ENCODE measurements at regions of chr1 and their contacts with region 1.

Region 1: GRCh38 chr1:101309334-101310311 is 72.8 kb downstream of the S1PR1 start:
- DNase-seq: peak; percentile 81
- ATAC-seq: peak; percentile 81
- H3K4me3 Mint-ChIP-seq: peak overlapping the region; percentile 75
- H3K27ac Mint-ChIP-seq: peak overlapping the region; percentile 95
- H3K4me1 Mint-ChIP-seq: peaks cover 72% of the 10 kb centered on the region
- H3K27me3 Mint-ChIP-seq: no peaks in the 10 kb centered on the region

Region 2: DNA sequence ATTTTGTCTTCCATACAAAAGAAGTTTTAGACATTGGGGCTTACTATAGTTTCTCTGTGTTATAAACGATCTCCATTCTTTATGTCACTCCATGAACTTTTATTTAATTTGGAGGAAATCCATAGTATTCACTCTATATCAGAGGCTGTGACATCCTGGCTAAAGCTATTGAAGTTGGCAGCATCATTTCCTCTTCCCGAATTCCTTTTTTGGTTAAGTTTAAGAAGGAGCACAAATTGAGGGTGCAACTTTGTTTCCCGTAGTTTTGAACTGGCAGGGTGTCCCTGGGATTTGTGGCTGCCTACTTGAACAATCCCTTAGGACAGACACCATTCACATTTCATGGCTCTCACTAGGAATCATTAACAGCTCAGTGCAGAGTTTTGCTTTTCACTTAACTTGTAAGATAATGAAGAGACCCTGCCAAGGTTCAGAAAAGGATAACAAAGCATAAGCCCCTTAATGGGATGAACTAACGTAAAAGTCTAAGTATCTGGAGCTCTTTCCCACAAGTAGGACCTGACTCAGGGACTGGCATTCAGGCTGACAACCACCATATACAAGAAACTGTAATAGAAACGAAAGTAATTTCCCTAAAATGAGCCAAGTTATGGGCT is 58.9 kb before region 1 on chr1:
- CTCF ChIA-PET with region 1: no interaction called
- POLR2A ChIA-PET with region 1: no interaction called
- DNase-seq: no peak
- ATAC-seq: no peak
- H3K4me3 Mint-ChIP-seq: no peak overlapping the region
- H3K27ac Mint-ChIP-seq: no peak overlapping the region
- H3K4me1 Mint-ChIP-seq: peaks cover 12% of the 10 kb centered on the region
- H3K27me3 Mint-ChIP-seq: no peaks in the 10 kb centered on the region

Region 3: GRCh38 chr1:101323535-101323934 is 13.9 kb after region 1 on chr1:
- CTCF ChIA-PET with region 1: interaction called, 30 read pairs
- POLR2A ChIA-PET with region 1: interaction called, 8 read pairs
- DNase-seq: no peak
- ATAC-seq: no peak
- H3K4me3 Mint-ChIP-seq: no peak overlapping the region
- H3K27ac Mint-ChIP-seq: no peak overlapping the region
- H3K4me1 Mint-ChIP-seq: no peaks in the 10 kb centered on the region
- H3K27me3 Mint-ChIP-seq: peaks cover 8% of the 10 kb centered on the region

Region 4: DNA sequence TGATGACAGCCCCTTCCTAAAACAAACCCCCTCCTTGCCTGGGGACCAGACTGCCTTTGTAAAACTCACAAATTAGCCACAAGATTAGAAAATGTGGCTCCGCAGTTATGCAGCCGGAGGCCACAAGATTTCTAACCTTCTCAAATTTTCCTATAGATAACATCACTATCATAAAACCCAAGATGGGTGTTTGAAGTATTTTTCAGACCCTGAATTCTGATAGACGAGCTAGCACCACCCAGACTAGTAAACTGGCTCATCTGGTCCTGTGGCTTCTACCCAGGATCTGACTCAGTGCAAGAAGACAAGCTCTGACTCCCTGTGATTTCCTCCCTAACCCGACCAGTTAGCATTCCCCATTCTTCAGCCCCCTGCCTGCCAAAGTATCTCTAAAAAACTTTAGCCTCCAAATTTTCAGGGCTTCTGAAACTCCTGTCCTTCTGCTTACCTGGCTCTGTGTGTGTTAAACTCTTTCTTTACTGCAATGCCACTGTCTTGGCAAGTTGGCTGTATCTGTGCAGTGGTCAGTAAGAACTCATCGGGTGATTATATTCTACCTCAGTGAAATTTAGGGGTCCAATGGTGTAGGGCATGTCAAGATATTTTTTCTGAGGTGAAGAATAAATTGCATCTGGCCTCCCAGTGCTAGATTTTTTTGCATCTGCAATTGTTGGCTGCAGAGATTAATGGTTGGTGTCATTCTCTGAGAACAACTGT is 29.2 kb after region 1 on chr1:
- CTCF ChIA-PET with region 1: interaction called, 13 read pairs
- POLR2A ChIA-PET with region 1: interaction called, 4 read pairs
- DNase-seq: no peak
- ATAC-seq: peak; percentile 64
- H3K4me3 Mint-ChIP-seq: no peak overlapping the region
- H3K27ac Mint-ChIP-seq: no peak overlapping the region
- H3K4me1 Mint-ChIP-seq: peaks cover 7% of the 10 kb centered on the region
- H3K27me3 Mint-ChIP-seq: no peaks in the 10 kb centered on the region

Region 5: DNA sequence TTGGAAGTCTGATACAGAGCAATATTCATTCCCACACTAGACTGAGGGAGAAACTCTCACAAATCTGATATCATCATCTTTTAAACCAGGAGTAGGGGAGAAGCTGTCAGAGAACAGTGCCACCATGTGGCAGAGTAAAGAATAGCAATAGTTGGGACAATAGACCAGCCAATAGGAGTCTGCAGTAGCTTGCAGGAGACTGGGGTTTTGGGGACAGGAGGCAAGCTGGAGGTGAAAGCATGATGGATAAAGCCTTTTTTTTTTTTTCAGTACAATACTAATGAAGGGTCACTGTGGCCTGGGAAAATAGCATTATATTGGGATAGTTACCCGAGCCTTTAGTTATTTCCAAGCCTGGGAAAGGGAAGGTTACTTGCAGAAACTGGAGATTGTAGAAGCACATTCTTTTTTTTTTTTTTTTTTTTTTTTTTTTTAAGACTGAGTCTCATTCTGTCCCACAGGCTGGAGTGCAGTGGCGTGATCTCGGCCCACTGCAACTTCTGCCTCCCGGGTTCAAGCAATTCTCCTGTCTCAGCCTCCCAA is 47.9 kb after region 1 on chr1:
- CTCF ChIA-PET with region 1: interaction called, 199 read pairs
- POLR2A ChIA-PET with region 1: interaction called, 18 read pairs
- DNase-seq: peak; percentile 85
- ATAC-seq: peak; percentile 100
- H3K4me3 Mint-ChIP-seq: no peak overlapping the region
- H3K27ac Mint-ChIP-seq: peak overlapping the region; percentile 60
- H3K4me1 Mint-ChIP-seq: peaks cover 8% of the 10 kb centered on the region
- H3K27me3 Mint-ChIP-seq: peaks cover 5% of the 10 kb centered on the region

Region 6: GRCh38 chr1:101388904-101389546 is 79.4 kb after region 1 on chr1:
- CTCF ChIA-PET with region 1: interaction called, 11 read pairs
- POLR2A ChIA-PET with region 1: no interaction called
- DNase-seq: peak; percentile 50
- ATAC-seq: peak; percentile 90
- H3K4me3 Mint-ChIP-seq: no peak overlapping the region
- H3K27ac Mint-ChIP-seq: peak overlapping the region; percentile 21
- H3K4me1 Mint-ChIP-seq: peaks cover 15% of the 10 kb centered on the region
- H3K27me3 Mint-ChIP-seq: no peaks in the 10 kb centered on the region

Region 7: DNA sequence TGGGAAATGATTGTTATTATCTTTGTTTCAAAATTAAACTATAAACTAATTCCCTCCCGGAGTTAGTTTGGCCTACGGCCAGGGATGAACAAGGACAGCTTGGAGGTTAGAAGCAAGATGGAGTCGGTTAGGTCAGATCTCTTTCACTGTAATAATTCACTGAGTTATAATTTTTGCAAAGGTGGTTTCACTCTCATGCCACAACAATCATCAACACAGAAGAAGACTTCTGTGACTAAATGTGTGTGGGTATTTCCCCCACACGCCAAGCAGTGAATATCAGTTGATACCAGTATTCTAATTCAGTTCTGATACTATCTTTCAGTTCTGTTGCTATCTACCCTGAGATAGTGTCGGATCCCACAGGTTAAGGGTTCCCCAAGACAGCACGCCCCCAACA is 142.3 kb after region 1 on chr1:
- CTCF ChIA-PET with region 1: interaction called, 40 read pairs
- POLR2A ChIA-PET with region 1: interaction called, 3 read pairs
- DNase-seq: no peak
- ATAC-seq: no peak
- H3K4me3 Mint-ChIP-seq: no peak overlapping the region
- H3K27ac Mint-ChIP-seq: no peak overlapping the region
- H3K4me1 Mint-ChIP-seq: peaks cover 34% of the 10 kb centered on the region
- H3K27me3 Mint-ChIP-seq: peaks cover 17% of the 10 kb centered on the region

Region 8: DNA sequence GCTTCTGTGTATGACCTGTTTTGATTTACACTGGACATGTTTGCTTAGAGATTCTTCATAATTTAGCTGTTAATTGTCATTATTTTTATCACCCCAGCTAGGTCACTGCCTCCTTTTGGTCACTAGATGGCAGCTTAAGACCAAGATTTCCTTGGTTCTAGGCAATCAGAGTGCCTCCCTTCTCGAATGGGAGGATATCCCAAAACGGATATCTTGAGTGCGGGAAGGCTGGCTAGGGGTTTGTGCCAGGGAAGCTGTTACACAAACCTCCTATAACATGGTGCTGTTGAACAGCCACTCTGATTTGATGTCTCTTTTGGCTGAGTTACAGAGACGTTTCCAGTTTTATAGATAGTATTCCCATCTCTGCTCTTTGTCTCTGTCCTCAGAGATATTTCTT is 210.7 kb after region 1 on chr1:
- CTCF ChIA-PET with region 1: interaction called, 14 read pairs
- POLR2A ChIA-PET with region 1: no interaction called
- DNase-seq: peak; percentile 39
- ATAC-seq: no peak
- H3K4me3 Mint-ChIP-seq: no peak overlapping the region
- H3K27ac Mint-ChIP-seq: no peak overlapping the region
- H3K4me1 Mint-ChIP-seq: peaks cover 6% of the 10 kb centered on the region
- H3K27me3 Mint-ChIP-seq: peaks cover 12% of the 10 kb centered on the region

Measured in activated CD8-positive, alpha-beta T cell treated with anti-CD3 and anti-CD28 coated beads, Interleukin-2, amount 10 ng/mL, durations not matched to agents 7 days and 5 days (primary cell).